Aorta (tissue), 5 donors: ENCODE measurements at regions of chr7 and their contacts with region 1.

Region 1: DNA sequence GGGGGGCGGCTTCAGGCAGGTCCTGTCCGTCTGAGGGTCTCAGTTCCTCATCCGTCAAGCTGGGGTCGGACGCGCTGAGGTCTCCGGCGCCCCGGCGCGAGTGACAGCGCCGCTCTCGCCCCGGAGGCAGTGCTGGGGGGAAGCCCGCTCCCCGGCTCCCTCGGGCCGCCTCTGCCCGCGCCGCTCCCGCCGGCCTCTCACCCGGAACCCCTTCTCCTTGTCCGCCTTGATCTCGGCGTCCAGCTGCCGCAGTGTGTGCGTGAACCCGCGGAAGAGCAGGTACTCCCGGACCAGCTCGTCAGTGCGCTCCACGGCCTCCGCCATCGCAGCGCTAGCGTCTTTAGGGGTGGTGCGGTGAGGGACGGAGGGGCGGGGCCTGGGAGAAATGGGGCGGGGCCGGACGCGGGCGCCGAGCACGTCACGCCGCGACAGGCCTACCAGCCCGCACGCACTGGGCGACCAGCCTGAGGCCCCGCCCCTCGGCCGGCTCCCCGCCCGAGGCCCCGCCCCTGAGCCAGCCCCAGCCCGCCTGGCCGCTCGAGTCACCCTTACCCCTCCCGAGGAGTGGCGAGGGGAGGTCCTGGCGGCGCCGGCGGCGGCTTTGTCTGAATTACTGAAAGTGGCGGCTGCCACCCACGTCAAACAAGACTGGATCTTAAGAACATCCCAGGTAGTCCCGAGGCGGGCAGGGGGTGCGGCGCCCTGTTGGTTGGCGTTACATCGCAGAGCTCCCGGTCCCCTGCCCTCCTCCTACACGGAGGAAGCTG is at the start of gene WDR91:
- DNase-seq: peak; percentile 97 to 99
- ATAC-seq: peak; percentile 98
- H3K4me3 ChIP-seq: peak within 1 kb of the TSS; percentile 75 to 94
- H3K27ac ChIP-seq: peak within 1 kb of the TSS; percentile 12 to 96
- H3K4me1 ChIP-seq: no peaks in the 10 kb centered on the region
- H3K27me3 ChIP-seq: no peaks in the 10 kb centered on the region
- total RNA-seq, gene WDR91: 16.6 to 41.4 TPM

Region 2: DNA sequence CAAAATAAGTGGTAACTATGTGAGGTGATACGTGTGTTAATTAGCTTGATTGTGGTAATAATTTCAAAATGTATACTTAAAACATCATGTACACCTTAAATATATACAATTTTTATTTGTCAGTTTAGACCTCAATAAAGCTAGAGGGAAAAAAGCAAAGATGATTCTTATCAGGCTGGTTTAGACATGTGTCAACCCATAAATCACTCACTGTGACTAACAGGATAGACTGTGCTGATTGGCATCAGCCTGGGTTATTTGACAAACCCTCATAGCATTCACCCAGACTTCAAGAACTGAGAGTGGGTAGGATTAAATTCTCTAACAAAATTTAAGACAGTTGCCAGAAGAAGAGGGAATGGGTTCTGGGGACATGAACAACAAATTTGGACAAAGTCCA is 137.3 kb before region 1 on chr7:
- intact Hi-C with region 1: no loop called
- DNase-seq: no peak
- ATAC-seq: no peak
- H3K4me3 ChIP-seq: no peak overlapping the region
- H3K27ac ChIP-seq: no peak overlapping the region
- H3K4me1 ChIP-seq: no peaks in the 10 kb centered on the region
- H3K27me3 ChIP-seq: no peaks in the 10 kb centered on the region

Region 3: GRCh38 chr7:135160098-135160857 is 51.1 kb before region 1 on chr7:
- intact Hi-C with region 1: no loop called
- DNase-seq: no peak
- ATAC-seq: peak; percentile 27
- H3K4me3 ChIP-seq: no peak overlapping the region
- H3K27ac ChIP-seq: peak overlapping the region in 1 of 2 donors; percentile 71
- H3K4me1 ChIP-seq: peaks cover 0 to 9% of the 10 kb centered on the region in 2 donors
- H3K27me3 ChIP-seq: no peaks in the 10 kb centered on the region

Region 4: DNA sequence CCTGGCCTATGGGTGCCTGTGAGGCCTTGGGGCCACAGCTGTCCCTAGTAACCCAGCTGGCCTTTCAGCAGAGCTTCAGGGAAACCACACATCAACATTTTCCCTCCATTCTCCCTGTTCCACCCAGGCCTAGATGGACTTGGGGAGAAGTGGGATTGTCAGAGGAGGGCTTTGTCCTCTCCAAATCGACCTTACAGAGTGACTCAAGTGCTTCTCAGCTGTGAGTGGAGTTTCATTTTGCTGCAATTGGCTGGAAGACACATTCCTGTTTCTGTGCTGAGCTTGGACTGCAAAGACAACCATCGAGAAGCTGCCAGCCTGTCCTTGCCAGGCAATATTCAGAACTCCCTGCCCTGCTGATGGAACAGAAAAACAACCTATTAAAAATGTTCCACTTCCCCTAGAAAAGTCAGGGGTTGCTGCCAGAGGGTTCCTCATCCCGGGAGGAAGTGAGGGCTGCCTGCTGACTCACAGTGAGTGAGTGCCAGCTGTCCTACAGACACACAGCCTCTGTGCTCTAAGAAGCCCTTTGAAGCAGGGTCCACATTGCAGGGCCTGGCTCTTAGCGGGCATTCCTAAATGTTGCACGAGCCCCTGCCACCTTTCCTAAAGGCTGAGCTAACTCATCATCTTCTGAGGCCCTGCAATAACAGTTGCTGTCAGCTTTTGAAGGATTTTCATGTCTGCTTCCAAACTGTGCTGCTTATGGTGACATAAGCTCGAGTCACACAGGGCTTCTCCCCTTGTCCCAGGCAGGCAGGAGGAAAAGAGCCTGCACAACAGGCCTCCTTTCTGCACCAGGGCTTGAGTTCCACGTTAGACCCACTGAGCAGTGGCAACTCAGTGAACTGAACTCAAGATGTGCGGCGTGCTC is 42.8 kb after region 1 on chr7:
- intact Hi-C with region 1: loop called (anchors 2 kb)
- DNase-seq: peak; percentile 91 to 94
- ATAC-seq: peak; percentile 89
- H3K4me3 ChIP-seq: no peak overlapping the region
- H3K27ac ChIP-seq: peak overlapping the region; percentile 23 to 93
- H3K4me1 ChIP-seq: no peaks in the 10 kb centered on the region
- H3K27me3 ChIP-seq: no peaks in the 10 kb centered on the region

Region 5: DNA sequence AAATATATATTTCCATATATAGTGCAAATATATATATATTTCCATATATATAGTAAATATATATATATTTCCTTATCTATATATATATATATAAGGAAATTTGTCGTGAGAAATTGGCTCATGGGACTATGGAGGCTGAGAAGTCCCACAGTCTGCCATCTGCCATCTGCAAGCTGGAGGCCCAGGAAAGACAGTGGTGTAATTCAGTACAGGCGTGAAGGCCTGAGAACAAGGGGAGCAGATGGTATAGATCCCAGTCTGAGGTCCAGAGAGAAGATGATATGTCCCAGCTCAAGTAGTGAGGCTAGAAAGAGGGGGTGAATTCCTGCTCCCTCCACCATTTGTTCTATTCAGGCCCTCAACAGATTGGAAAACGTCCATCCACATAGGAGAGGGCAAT is 686.9 kb after region 1 on chr7:
- intact Hi-C with region 1: no loop called
- DNase-seq: no peak
- ATAC-seq: no peak
- H3K4me3 ChIP-seq: no peak overlapping the region
- H3K27ac ChIP-seq: no peak overlapping the region
- H3K4me1 ChIP-seq: no peaks in the 10 kb centered on the region
- H3K27me3 ChIP-seq: no peaks in the 10 kb centered on the region